ENCODE measurements at regions of chr17 and their contacts with region 1.

Region 1: DNA sequence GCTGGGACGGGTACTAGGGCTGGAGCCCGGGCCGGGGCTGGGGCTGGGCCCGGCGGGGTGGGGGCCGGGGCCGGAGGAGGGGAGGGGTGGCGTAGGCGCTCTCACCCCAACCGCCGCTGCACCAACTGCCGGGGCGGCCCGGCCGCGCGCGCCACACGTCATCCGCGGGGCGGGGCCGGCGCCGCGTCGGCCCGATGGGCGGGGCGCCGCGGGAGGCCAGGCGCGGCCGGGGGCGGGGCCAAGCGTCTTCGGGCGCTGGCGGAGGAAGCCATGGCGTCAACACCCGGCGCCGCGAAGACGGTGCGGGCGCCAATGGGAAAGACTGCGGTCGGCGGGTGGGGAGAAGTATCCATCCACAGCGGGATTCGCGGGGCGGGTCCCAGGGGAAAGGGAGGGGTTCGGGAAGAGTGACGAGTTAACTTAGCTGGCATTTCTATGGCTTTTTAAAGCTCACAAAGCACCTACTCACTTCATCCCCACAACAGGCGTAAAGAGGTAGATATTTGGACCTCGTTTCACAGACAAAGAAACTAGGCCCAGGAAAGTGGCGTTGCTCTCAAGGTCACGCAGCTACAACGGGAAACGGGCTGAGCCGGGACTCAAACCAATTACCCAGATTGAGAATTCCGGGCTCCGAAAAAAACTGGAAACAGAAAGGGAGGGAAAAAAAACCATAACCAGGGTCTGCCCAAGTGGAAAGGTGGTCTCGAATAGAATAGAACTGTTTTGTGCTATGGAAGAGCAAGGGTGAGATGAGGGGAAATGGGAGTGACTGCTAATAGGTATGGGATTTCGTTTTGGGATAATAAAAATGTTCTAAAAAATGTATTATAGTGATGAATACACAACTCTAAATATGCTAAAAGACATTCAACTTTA is at the start of gene SPAG9:
- DNase-seq: peak; percentile 93
- H3K4me3 Mint-ChIP-seq: peak within 1 kb of the TSS; percentile 93
- H3K27ac Mint-ChIP-seq: peak within 1 kb of the TSS; percentile 99
- H3K4me1 Mint-ChIP-seq: peaks cover 44% of the 10 kb centered on the region
- H3K27me3 Mint-ChIP-seq: no peaks in the 10 kb centered on the region
- total RNA-seq, gene SPAG9: 48.1 and 48.3 TPM in 2 replicates

Region 2: DNA sequence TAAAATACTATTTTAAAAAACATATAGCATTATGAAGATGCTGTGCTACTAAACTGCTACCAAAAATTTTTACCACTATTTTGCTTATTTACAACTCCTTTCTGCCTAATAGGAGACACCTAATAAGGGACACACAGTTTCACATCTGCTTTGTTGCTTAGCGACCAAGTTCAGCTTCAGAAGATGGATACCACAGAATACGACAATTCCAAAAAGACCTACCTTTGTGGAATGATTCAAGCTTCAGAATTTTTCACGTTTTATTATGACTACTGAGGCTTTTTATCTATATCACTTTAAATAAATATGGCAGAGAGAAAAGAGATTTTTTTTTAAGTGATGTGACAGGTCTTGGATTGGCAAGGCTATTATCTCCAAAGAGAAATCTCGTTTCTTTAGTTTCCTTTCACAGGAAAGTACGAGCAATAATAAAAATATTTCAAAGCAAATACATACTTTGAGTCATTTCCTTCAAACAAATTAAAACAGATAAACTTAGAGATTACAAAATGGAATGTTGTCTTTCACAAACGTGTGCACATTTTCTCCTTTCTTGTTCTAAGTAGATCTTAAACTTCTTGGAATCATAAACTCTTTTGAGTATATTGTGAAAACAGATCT is 35.7 kb before region 1 on chr17:
- intact Hi-C with region 1: loop called (anchors 2 kb)
- DNase-seq: no peak
- H3K4me3 Mint-ChIP-seq: no peak overlapping the region
- H3K27ac Mint-ChIP-seq: no peak overlapping the region
- H3K4me1 Mint-ChIP-seq: peaks cover 9% of the 10 kb centered on the region
- H3K27me3 Mint-ChIP-seq: no peaks in the 10 kb centered on the region

Region 3: DNA sequence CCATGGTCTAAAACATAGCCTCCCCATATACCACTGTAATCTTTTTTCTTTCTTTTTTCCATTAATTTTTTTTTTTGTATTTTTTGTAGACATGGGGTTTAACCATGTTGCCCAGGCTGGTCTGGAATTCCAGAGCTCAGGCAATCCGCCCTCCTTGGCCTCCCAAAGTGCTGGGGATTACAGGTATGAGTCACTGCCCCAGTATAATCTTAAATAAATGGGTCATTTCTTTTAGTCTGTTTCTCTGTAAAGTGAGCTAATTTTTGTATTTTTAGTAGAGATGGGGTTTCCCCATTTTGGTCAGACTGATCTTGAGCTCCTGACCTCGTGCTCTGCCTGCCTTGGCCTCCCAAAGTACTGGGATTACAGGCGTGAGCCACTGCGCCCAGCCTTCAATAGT is 26.7 kb after region 1 on chr17:
- intact Hi-C with region 1: loop called (anchors 1 kb)
- DNase-seq: no peak
- H3K4me3 Mint-ChIP-seq: peak overlapping the region; percentile 4
- H3K27ac Mint-ChIP-seq: peak overlapping the region; percentile 87
- H3K4me1 Mint-ChIP-seq: peaks cover 23% of the 10 kb centered on the region
- H3K27me3 Mint-ChIP-seq: no peaks in the 10 kb centered on the region

Region 4: DNA sequence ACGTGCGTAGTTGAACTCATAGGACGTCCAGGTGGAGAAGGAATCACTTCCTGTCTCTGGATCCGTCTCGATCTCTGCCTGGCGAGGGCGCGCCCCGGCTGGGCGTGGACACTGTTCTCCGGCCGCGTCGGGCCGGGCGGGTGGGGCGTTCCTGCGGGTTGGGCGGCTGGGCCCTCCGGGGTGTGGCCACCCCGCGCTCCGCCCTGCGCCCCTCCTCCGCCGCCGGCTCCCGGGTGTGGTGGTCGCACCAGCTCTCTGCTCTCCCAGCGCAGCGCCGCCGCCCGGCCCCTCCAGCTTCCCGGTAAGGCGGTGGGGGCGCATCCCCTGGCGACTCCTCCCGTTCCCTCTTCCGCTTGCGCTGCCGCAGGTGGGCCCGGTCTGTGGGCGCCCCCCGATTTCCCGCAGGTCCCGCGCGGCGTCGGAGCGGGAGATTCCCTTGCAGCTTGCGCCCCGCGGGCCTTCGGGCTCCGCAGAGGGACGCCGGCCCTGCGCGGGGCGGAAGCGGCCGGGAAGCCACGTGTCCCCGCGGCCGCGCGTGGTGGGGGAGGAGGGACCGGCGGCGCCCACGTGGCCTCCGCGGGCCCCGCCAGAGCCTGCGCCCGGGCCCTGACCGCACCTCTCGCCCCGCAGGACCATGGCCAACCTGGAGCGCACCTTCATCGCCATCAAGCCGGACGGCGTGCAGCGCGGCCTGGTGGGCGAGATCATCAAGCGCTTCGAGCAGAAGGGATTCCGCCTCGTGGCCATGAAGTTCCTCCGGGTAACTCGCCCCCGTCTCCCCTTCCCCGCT is 45.4 kb after region 1 on chr17 and contains the start of gene NME2:
- intact Hi-C with region 1: loop called (anchors 5 kb)
- DNase-seq: peak; percentile 68
- H3K4me3 Mint-ChIP-seq: peak within 1 kb of the TSS; percentile 89
- H3K27ac Mint-ChIP-seq: peak within 1 kb of the TSS; percentile 90
- H3K4me1 Mint-ChIP-seq: peaks cover 26% of the 10 kb centered on the region
- H3K27me3 Mint-ChIP-seq: no peaks in the 10 kb centered on the region
- total RNA-seq, gene NME2: 708 and 735 TPM in 2 replicates

Region 5: DNA sequence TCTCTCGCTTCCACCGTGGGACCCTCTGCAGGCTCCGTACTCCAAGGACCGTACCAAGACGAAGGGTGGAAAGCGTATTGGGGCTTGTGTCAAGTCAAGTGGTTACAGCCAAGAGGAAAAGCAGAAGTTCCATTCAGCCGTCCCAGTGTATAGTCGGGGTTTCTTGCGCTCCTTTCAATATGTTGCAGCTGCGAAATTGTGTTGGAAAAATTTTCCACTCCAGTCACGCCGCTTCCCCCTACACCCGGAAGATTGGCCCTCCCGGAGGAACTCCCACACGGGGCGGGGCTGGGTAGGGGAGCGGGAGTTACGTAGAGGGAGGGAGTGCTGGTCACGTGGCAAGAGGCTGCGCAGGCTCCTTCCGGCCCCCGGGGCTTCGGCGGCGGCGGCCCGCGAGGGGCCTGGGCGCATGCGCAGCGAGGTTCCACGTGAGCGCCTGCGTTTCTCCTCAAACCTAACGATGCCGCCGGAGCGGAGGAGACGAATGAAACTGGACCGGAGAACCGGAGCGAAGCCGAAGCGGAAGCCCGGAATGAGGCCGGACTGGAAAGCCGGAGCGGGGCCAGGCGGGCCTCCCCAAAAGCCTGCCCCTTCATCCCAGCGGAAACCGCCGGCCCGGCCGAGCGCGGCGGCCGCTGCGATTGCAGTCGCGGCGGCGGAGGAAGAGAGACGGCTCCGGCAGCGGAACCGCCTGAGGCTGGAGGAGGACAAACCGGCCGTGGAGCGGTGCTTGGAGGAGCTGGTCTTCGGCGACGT is 139.3 kb after region 1 on chr17 and contains the start of gene UTP18:
- intact Hi-C with region 1: loop called (anchors 1 kb)
- DNase-seq: peak; percentile 94
- H3K4me3 Mint-ChIP-seq: peak within 1 kb of the TSS; percentile 88
- H3K27ac Mint-ChIP-seq: peak within 1 kb of the TSS; percentile 97
- H3K4me1 Mint-ChIP-seq: peaks cover 49% of the 10 kb centered on the region
- H3K27me3 Mint-ChIP-seq: no peaks in the 10 kb centered on the region
- total RNA-seq, gene UTP18: 75.7 and 78.7 TPM in 2 replicates

Measured in activated T-helper 2 cell treated with anti-CD3 and anti-CD28 coated beads, Interferon-gamma antibody, Interleukin-2, Interleukin-4, amounts not matched to agents 10 μg/mL and 5 μg/mL and 100 μg/mL, durations not matched to agents 14 hours and 24 hours and 36 hours (primary cell).